Activated T-helper 1 cell treated with anti-CD3 and anti-CD28 coated beads, Interleukin-12 subunit alpha, Interleukin-12 subunit beta, Interleukin-2, Interleukin-4 antibody, amounts not matched to agents 30 ng/mL and 10 ng/mL and 1 ng/mL, durations not matched to agents 14 hours and 24 hours and 36 hours (primary cell): ENCODE measurements at regions of chr3 and their contacts with region 1.

Region 1: GRCh38 chr3:50192689-50193141 is 1.3 kb downstream of the GNAT1 start:
- DNase-seq: peak; percentile 72
- H3K4me3 Mint-ChIP-seq: no peak overlapping the region
- H3K27ac Mint-ChIP-seq: no peak overlapping the region
- H3K4me1 Mint-ChIP-seq: peaks cover 6% of the 10 kb centered on the region
- H3K27me3 Mint-ChIP-seq: peaks cover 18% of the 10 kb centered on the region

Region 2: GRCh38 chr3:50121416-50122032 is 71.2 kb before region 1 on chr3:
- intact Hi-C with region 1: loop called (anchors 1 kb)
- DNase-seq: peak; percentile 36
- H3K4me3 Mint-ChIP-seq: no peak overlapping the region
- H3K27ac Mint-ChIP-seq: no peak overlapping the region
- H3K4me1 Mint-ChIP-seq: no peaks in the 10 kb centered on the region
- H3K27me3 Mint-ChIP-seq: no peaks in the 10 kb centered on the region

Region 3: DNA sequence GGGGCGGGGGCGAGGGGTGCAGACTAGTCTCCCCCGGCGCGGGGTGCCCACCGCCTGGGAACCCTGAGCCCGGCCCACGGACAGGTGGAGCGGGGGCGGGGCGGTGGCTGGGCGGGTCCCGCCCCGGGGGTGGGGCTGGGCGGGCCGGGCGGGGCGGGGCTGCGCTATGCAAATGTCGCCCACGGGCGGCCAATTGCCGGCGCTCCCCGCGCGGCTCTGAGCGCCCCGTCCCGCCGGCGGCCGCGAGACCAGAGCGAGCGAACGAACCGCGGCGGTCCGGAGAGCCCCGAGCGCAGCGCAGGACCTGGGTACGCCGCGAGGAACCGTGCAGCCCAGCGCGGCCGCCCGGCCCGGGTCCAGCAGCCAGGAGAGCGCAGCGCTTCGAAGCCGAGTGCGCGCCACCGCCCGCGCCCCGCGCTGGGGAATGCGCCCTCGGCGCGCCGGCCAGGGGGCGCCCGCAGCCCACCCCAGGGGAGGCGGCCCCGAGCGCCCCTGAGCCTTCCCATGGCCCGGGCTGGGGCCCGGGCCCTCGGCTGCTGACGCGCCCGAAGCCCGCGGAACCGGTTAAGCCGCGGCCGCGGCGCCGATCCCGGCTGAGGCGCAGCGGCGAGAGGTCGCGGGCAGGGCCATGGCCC is 37.8 kb before region 1 on chr3 and contains the start of gene SEMA3F:
- intact Hi-C with region 1: loop called (anchors 1 kb)
- DNase-seq: peak; percentile 69
- H3K4me3 Mint-ChIP-seq: peak within 1 kb of the TSS; percentile 81
- H3K27ac Mint-ChIP-seq: no peak within 1 kb of the TSS
- H3K4me1 Mint-ChIP-seq: no peaks in the 10 kb centered on the region
- H3K27me3 Mint-ChIP-seq: peaks cover 47% of the 10 kb centered on the region
- total RNA-seq, gene SEMA3F: 0.21 and 0.42 TPM in 2 replicates

Region 4: DNA sequence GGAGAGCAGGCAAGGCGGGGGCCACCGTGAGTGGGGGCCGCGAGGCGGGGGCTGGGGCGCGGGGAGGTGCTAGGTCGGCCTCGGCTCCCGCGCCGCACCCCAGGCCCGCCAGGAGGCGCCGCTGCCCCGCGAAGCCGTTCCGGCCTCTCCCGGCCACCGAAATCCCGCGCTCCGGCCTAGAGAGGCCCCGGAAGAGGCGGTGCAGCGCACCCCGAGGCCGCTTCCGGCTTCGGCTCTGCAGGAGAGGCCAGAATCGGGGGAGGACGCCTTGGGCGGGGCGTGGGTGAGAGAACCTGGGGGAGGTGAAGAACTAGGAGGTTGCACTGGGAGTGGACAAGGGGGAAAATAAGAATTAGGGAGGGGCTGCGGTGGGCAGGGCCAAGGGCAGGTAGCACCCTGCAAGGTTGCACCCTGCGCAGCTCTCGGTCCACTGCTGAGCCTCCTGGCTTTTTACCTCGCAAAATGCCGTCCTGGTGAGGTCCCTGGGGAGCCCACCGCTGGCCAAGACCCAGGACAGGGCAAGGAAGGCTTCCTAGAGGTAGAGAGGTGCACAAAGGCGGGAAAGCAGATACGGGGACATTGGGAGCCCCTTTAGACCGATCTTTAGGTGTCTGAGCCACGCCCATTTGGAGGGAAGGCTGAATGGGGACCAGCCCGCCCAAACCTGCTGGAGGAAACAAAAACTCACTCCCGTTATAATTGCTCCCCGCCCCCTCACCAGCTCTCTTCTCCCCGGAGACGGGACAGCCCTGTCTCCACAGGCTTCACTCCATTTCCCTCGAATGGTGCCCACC is 34.9 kb after region 1 on chr3:
- intact Hi-C with region 1: loop called (anchors 1 kb)
- DNase-seq: peak; percentile 91
- H3K4me3 Mint-ChIP-seq: peak overlapping the region; percentile 90
- H3K27ac Mint-ChIP-seq: peak overlapping the region; percentile 90
- H3K4me1 Mint-ChIP-seq: peaks cover 34% of the 10 kb centered on the region
- H3K27me3 Mint-ChIP-seq: peaks cover 13% of the 10 kb centered on the region

Region 5: DNA sequence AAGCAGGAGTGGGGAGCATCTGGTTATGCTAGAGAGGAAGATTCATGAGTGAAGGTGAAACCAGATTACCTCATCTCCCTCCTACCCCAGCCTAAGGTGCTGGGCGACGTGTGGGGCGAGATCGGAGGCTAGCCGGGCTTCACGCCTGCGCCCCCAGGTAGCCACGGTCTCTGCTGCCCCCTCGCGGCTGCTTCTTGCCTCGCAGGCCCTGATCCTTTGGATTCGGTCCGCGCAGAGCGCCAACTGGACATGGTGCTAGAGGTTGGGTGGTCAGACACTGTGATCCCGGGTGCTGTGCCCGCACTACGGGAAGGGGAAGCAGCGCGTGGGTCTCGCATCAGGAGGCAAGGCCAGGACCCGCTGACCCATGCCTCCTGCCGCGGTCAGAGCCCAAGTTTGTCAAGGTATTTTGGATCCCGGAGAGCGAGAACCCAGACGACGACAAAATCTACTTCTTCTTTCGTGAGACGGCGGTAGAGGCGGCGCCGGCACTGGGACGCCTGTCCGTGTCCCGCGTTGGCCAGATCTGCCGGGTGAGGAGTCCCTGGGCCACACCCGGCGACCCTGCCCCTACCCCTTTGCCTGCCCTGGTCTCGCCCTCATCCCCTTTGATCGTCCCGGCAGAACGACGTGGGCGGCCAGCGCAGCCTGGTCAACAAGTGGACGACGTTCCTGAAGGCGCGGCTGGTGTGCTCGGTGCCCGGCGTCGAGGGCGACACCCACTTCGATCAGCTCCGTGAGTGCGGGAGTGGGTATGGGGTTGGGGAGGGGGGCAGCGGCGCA is 80.4 kb after region 1 on chr3:
- intact Hi-C with region 1: loop called (anchors 1 kb)
- DNase-seq: peak; percentile 82
- H3K4me3 Mint-ChIP-seq: peak overlapping the region; percentile 71
- H3K27ac Mint-ChIP-seq: no peak overlapping the region
- H3K4me1 Mint-ChIP-seq: peaks cover 21% of the 10 kb centered on the region
- H3K27me3 Mint-ChIP-seq: peaks cover 39% of the 10 kb centered on the region

Region 6: GRCh38 chr3:50321336-50322114 is 128.8 kb after region 1 on chr3:
- intact Hi-C with region 1: loop called (anchors 1 kb)
- DNase-seq: peak; percentile 81
- H3K4me3 Mint-ChIP-seq: peak overlapping the region; percentile 79
- H3K27ac Mint-ChIP-seq: peak overlapping the region; percentile 83
- H3K4me1 Mint-ChIP-seq: peaks cover 35% of the 10 kb centered on the region
- H3K27me3 Mint-ChIP-seq: no peaks in the 10 kb centered on the region

Region 7: GRCh38 chr3:50481992-50482391 is 289.3 kb after region 1 on chr3:
- intact Hi-C with region 1: no loop called
- DNase-seq: no peak
- H3K4me3 Mint-ChIP-seq: no peak overlapping the region
- H3K27ac Mint-ChIP-seq: no peak overlapping the region
- H3K4me1 Mint-ChIP-seq: no peaks in the 10 kb centered on the region
- H3K27me3 Mint-ChIP-seq: no peaks in the 10 kb centered on the region